Activated T-helper 2 cell treated with anti-CD3 and anti-CD28 coated beads, Interferon-gamma antibody, Interleukin-2, Interleukin-4, amounts not matched to agents 10 μg/mL and 5 μg/mL and 100 μg/mL, durations not matched to agents 14 hours and 24 hours and 36 hours (primary cell): ENCODE measurements at regions of chr2 and their contacts with region 1.

Region 1: GRCh38 chr2:45843136-45843535 is 191.7 kb downstream of the PRKCE start:
- DNase-seq: no peak
- H3K4me3 Mint-ChIP-seq: peak overlapping the region; percentile 24
- H3K27ac Mint-ChIP-seq: peak overlapping the region; percentile 67
- H3K4me1 Mint-ChIP-seq: peaks cover 62% of the 10 kb centered on the region
- H3K27me3 Mint-ChIP-seq: no peaks in the 10 kb centered on the region

Region 2: DNA sequence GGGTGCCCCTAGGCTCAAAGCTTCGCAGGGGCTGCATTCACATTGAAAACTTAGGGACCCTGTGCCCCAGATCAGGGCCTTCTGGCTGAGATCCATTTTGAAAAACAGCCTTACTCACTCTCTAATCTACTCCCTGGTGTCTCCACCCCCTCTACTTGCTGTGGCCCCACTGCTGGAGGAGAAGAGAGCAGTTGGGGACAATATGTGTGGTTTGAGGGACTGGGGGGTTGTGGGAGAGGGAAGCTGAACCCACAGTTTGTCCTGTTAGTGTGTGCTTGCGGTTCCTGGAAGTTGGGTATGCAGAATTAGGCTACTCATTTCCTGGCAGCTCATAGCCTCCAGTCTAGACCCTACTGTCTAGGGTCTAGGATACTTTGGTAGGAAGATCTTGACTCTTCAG is 19.7 kb after region 1 on chr2:
- intact Hi-C with region 1: loop called (anchors 2 kb)
- DNase-seq: no peak
- H3K4me3 Mint-ChIP-seq: no peak overlapping the region
- H3K27ac Mint-ChIP-seq: peak overlapping the region; percentile 62
- H3K4me1 Mint-ChIP-seq: peaks cover 51% of the 10 kb centered on the region
- H3K27me3 Mint-ChIP-seq: no peaks in the 10 kb centered on the region

Region 3: DNA sequence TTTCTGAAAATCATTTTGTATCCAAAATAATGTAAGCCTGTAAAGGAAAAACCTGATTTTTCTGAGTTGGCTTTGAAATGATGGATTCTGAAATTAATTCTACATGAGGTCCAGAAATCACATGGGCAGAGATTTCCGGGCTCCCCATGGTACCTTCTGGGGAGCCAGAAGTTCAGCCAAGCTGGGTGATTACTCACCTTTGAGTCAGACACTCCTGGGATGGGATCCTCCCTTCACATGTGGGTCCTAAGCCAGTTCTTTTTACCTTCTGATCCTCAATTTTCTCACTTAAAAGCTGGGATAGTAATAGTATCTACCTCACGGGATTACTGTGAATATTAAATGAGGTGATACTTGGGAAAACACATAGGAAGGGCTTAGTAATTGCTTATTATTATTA is 274.2 kb after region 1 on chr2:
- intact Hi-C with region 1: no loop called
- DNase-seq: no peak
- H3K4me3 Mint-ChIP-seq: no peak overlapping the region
- H3K27ac Mint-ChIP-seq: no peak overlapping the region
- H3K4me1 Mint-ChIP-seq: peaks cover 5% of the 10 kb centered on the region
- H3K27me3 Mint-ChIP-seq: no peaks in the 10 kb centered on the region